ENCODE measurements at regions of chr14 and their contacts with region 1.

Region 1: GRCh38 chr14:90235179-90235976 is 21.0 kb upstream of the PSMC1 start:
- DNase-seq: peak; percentile 82
- ATAC-seq: peak; percentile 61
- H3K4me3 Mint-ChIP-seq: no peak overlapping the region
- H3K27ac Mint-ChIP-seq: no peak overlapping the region
- H3K4me1 Mint-ChIP-seq: no peaks in the 10 kb centered on the region
- H3K27me3 Mint-ChIP-seq: peaks cover 7% of the 10 kb centered on the region

Region 2: DNA sequence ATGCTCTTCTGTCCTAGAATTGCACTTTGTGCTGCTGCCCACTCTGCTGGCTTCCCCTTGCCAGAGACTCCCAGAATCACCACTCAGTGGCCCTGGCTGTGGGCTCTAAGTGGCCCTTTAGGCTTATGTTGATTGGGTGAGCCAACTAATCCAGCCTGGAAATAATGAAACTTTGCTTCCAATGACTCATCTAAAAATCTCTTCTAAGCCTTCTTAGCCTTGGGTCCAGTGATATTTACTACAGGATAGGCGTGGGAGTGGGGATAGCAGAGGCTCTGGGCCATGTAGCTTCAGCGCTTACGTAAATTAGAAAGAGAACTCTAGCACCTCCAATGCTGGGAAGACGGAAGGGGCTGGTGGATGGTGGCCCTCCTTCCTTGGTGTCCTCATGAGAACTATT is 1273.0 kb before region 1 on chr14:
- CTCF ChIA-PET with region 1: no interaction called
- POLR2A ChIA-PET with region 1: no interaction called
- intact Hi-C with region 1: no loop called
- DNase-seq: no peak
- ATAC-seq: no peak
- H3K4me3 Mint-ChIP-seq: no peak overlapping the region
- H3K27ac Mint-ChIP-seq: no peak overlapping the region
- H3K4me1 Mint-ChIP-seq: no peaks in the 10 kb centered on the region
- H3K27me3 Mint-ChIP-seq: peaks cover 9% of the 10 kb centered on the region

Region 3: GRCh38 chr14:90060312-90060964 is 174.9 kb before region 1 on chr14:
- CTCF ChIA-PET with region 1: interaction called, 3 read pairs
- POLR2A ChIA-PET with region 1: no interaction called
- intact Hi-C with region 1: loop called (anchors 1 to 10 kb)
- DNase-seq: peak; percentile 77
- ATAC-seq: peak; percentile 86
- H3K4me3 Mint-ChIP-seq: peak overlapping the region; percentile 64
- H3K27ac Mint-ChIP-seq: no peak overlapping the region
- H3K4me1 Mint-ChIP-seq: peaks cover 24% of the 10 kb centered on the region
- H3K27me3 Mint-ChIP-seq: peaks cover 64% of the 10 kb centered on the region

Region 4: DNA sequence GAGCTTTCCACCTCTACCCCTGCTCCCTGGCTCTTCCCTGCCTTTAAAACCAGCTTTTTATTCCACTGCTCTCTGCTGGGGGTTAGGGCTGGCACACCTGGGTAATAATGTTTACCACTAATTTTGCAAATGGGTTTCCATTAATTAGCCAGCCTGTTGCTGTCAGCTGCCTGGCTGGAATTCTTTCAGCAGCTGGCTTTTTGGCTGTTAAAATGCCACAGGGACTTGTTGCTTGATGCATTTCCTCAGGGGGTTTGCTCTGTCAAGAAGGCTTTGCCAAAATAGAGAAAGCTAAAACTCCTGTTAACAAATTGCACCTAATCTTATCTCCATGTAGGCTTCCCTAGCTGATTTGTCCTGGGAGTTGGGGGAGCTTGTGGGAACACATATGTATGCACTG is 30.9 kb before region 1 on chr14:
- CTCF ChIA-PET with region 1: no interaction called
- POLR2A ChIA-PET with region 1: no interaction called
- intact Hi-C with region 1: no loop called
- DNase-seq: no peak
- ATAC-seq: no peak
- H3K4me3 Mint-ChIP-seq: no peak overlapping the region
- H3K27ac Mint-ChIP-seq: no peak overlapping the region
- H3K4me1 Mint-ChIP-seq: no peaks in the 10 kb centered on the region
- H3K27me3 Mint-ChIP-seq: no peaks in the 10 kb centered on the region

Region 5: DNA sequence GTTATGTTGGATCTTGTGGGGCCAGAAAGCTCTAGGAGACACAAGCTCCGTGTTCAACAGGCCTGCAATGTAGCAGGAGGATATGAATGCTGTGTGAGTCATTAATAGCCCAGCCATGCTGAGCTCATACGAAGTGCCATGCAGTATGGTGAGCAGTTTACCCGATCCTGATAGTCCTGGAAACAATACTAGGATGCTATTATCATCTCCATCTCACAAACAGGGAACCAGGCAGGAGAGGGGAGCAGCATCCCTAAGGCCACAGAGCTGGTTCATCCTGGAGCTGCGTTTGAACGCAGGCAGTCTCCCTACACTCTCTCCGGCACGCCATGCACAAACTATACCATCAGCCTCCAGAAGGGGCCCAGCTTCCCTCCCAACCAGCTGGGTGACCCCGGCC is 560.4 kb after region 1 on chr14:
- CTCF ChIA-PET with region 1: no interaction called
- POLR2A ChIA-PET with region 1: no interaction called
- intact Hi-C with region 1: no loop called
- DNase-seq: no peak
- ATAC-seq: no peak
- H3K4me3 Mint-ChIP-seq: no peak overlapping the region
- H3K27ac Mint-ChIP-seq: no peak overlapping the region
- H3K4me1 Mint-ChIP-seq: no peaks in the 10 kb centered on the region
- H3K27me3 Mint-ChIP-seq: no peaks in the 10 kb centered on the region